Common myeloid progenitor, CD34-positive (primary cell): ENCODE measurements at regions of chr1 and their contacts with region 1.

Region 1: DNA sequence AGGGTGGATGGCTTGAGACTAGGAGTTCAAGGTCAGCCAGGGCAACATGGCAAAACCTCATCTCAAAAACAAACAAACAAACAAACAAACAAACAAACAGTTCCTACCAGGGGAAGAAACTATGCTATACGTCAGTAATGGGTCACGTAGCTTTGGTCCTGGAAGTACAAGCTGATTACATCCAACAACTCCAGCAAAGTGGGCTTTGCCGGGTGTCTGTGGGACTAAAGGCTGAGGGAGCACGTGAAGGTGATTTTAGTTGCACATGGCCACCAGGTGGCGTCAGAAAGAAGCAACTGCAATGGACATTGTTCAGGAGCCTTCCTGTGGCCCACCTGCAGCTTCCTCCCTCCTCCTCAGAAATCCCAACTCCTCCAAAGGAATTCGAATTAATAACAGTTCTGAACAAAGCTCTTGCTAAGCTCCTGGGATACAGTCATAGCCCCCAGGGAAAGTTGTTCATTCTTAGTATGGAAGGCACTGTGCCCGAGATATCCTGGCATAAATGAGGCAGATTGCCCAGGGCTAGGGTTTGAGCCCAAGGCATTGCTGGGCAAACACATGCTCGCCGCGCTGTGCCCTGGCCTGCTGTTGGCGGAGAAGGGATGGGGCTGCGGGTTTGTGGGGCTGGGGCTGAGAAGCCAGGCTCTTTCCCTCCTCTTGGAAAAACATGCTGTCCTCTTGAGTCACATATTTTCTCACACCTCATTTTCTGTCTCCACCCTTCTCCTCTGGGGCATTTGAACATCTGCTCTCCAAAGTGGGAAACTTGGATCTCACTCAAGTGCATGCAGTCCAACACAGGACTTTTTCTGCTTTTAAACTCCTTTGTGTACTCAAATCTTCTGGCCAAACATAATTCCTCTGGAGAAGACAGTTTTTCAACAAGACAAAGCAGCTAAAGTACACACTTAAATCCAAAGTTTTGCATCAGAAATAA is 28.6 kb downstream of the AKNAD1 start:
- DNase-seq: peak; percentile 76 to 82 (median 78)
- H3K4me3 ChIP-seq: no peak overlapping the region
- H3K27ac ChIP-seq: no peak overlapping the region
- H3K4me1 ChIP-seq: peaks cover 0 to 22% (median 12%) of the 10 kb centered on the region in 4 experiments
- H3K27me3 ChIP-seq: no peaks in the 10 kb centered on the region

Region 2: GRCh38 chr1:108843390-108844137 is 15.3 kb after region 1 on chr1:
- CTCF ChIA-PET with region 1: interaction called, 244 read pairs
- POLR2A ChIA-PET with region 1: no interaction called
- DNase-seq: no peak
- H3K4me3 ChIP-seq: no peak overlapping the region
- H3K27ac ChIP-seq: no peak overlapping the region
- H3K4me1 ChIP-seq: peaks cover 8 to 30% (median 11%) of the 10 kb centered on the region in 4 experiments
- H3K27me3 ChIP-seq: no peaks in the 10 kb centered on the region

Region 3: DNA sequence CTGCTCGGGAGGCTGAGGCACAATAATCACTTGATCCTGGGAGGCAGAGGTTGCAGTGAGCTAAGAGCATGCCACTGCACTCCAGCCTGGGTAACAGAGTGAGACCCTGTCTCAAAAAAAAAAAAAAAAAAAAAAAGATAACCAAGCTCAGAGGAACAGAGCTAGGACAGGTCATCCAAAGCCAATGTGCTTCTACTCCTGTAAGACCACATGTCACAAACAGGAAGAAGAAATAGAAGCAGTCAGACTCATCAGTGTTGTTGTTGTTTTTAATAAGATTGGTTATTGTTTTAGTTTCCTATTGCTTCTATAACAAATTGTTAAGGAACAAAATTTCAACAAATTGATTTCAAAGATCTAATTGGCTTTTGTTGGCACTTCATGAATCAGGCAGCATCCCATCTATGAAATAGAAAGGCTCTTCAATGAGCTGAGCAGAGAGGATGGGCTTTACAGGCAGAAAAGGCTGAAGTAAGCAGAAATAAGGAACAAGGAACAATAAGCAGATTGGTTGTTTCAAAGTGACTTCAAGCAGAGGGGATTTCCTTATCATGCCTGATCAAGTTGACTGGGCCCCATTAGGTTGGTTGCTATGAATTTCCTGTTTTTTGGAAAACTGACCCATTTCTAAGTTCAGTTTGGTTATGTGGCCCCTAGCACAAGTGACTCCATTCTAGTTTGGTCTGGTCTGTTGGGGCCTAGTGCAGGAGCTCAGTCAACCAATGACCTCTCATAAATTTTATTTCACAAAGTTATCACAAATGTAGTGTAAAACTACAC is 34.6 kb after region 1 on chr1:
- CTCF ChIA-PET with region 1: interaction called, 244 read pairs
- POLR2A ChIA-PET with region 1: no interaction called
- DNase-seq: peak in 2 of 3 donors; percentile 52 to 64
- H3K4me3 ChIP-seq: no peak overlapping the region
- H3K27ac ChIP-seq: no peak overlapping the region
- H3K4me1 ChIP-seq: peaks cover 3 to 23% (median 14%) of the 10 kb centered on the region in 4 experiments
- H3K27me3 ChIP-seq: no peaks in the 10 kb centered on the region

Region 4: GRCh38 chr1:108877348-108878159 is 49.3 kb after region 1 on chr1:
- CTCF ChIA-PET with region 1: interaction called, 102 read pairs
- POLR2A ChIA-PET with region 1: no interaction called
- DNase-seq: peak in 1 of 3 donors; percentile 39
- H3K4me3 ChIP-seq: peak overlapping the region; percentile 86 to 99 (median 95)
- H3K27ac ChIP-seq: peak overlapping the region; percentile 61 to 86
- H3K4me1 ChIP-seq: peaks cover 8 to 35% (median 19%) of the 10 kb centered on the region in 4 experiments
- H3K27me3 ChIP-seq: no peaks in the 10 kb centered on the region